PC-9 (cell line): ENCODE measurements at regions of chr5 and their contacts with region 1.

Region 1: DNA sequence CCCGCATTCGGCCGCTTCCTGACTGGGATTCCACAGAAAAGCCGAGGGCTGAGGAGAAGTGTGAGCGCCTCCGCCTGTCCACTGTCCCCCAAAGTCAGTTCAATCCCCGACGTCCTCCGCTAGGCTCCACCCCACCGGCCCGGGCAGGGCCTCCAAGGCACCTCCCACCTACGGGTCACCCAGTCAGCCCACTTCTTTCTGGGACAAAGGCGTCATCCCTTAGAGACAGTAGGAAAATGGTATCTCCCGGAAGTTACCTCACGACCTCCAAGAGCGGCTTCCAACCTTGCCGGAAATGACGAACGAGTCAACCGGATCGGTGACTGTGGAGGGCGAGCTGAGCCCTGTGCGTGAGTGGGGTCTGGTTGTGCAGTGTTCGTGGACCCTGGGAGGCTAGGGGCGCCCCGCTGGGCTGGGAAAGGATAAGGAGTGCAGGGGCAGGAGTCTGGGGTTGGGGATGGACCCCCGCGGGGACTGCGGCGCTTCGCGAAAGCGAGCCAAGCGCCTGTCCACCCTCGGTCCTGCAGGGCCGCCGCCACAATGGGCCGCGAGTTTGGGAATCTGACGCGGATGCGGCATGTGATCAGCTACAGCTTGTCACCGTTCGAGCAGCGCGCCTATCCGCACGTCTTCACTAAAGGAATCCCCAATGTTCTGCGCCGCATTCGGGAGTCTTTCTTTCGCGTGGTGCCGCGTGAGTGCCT is at the starts of genes GDF9 and UQCRQ:
- DNase-seq: peak; percentile 96 to 97
- H3K4me3 ChIP-seq: peak within 1 kb of the TSS; percentile 76
- H3K27ac ChIP-seq: peak within 1 kb of the TSS; percentile 69
- H3K4me1 ChIP-seq: peaks cover 18% of the 10 kb centered on the region
- H3K27me3 ChIP-seq: no peaks in the 10 kb centered on the region
- CTCF ChIP-seq: peak; percentile 36; the same call in 1 of the 2 replicates
- total RNA-seq, gene GDF9: 0.73 and 1.4 TPM in 2 replicates
- total RNA-seq, gene UQCRQ: 414 and 446 TPM in 2 replicates

Region 2: GRCh38 chr5:132674671-132675506 is 191.6 kb before region 1 on chr5:
- CTCF ChIA-PET with region 1: no interaction called
- POLR2A ChIA-PET with region 1: no interaction called
- intact Hi-C with region 1: loop called (anchors 5 kb)
- DNase-seq: peak; percentile 42 to 81
- H3K4me3 ChIP-seq: no peak overlapping the region
- H3K27ac ChIP-seq: no peak overlapping the region
- H3K4me1 ChIP-seq: peaks cover 11% of the 10 kb centered on the region
- H3K27me3 ChIP-seq: no peaks in the 10 kb centered on the region
- CTCF ChIP-seq: no peak

Region 3: DNA sequence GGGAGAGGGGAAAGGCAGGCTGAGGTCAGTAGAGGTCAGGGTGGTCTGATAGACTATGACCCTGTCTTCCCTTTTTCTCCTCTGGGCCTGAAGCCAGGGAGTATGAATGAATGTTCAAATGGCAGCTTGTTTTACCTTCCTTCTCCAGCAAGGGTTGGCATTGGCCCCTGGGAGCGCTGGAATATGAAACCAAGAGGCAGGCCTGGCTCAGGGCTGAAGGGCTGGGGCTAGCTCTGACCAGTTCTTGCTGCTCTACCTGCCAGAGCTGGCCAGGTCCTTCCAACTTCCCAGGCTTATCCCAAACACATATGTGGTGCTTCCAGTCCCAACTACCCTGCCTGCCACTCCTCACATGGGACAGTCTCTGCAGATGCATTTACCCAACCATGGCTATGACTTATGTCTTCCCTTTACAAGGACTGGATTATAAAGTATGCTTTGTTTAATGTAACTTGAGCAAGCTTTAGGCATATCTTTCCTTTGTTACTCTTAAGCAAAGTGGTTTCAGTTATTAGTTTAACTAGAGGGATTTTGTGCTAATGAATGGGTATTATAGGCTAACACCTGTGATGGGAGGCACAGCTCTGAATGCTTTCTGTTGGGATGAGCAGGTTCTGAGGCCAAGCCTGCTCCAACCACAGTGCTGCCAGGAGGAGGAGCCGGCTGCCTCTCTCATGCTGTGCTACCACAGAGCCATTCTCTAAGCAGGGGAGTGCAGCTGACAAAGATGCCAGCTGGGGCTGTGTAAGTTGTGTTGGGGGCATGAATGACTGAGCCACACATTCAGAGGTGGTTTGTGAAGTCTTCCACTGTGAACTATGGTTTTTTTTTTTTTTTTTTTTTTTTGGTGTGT is 113.1 kb before region 1 on chr5:
- CTCF ChIA-PET with region 1: no interaction called
- POLR2A ChIA-PET with region 1: no interaction called
- intact Hi-C with region 1: loop called (anchors 5 kb)
- DNase-seq: no peak
- H3K4me3 ChIP-seq: no peak overlapping the region
- H3K27ac ChIP-seq: no peak overlapping the region
- H3K4me1 ChIP-seq: no peaks in the 10 kb centered on the region
- H3K27me3 ChIP-seq: no peaks in the 10 kb centered on the region
- CTCF ChIP-seq: no peak

Region 4: DNA sequence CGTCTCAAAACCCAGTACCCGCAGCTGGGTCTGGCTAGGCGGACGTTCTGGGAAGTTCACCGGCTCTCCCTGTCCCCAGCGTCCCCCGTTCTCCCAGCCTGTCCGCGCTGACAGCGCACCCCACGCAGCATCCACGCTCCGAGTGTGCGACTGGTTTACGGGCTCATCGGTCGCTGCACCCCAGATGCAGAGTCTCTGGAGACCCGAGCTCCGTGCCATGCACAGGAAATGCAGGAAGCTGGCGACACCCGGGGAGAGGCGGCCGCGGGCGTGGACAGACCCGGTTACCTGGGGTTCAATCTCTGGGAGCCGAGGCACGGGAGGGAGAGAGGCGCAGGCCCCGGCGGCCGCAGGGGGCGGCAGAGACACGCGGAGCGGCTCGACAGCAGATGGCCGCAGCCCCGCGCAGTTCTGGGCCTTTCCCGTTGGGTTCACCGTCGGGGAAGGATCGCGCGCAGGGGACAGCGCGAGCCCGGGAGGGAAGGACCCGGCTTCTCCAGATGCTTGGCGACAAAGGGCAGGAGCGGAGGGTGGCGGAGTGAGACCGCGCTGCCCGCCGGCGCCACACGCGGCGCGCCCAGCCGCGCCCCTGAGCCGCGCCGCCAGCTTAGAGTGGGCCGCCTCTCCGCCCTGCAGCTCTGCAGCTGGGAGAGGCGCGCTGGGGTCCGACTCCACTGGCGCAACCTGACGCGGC is 36.6 kb before region 1 on chr5:
- CTCF ChIA-PET with region 1: interaction called, 5 read pairs
- POLR2A ChIA-PET with region 1: interaction called, 15 read pairs
- intact Hi-C with region 1: loop called (anchors 1 kb)
- DNase-seq: peak; percentile 59 to 79
- H3K4me3 ChIP-seq: peak overlapping the region; percentile 83
- H3K27ac ChIP-seq: peak overlapping the region; percentile 42; the same call in 1 of the 2 replicates
- H3K4me1 ChIP-seq: peaks cover 14% of the 10 kb centered on the region; the same call in 1 of the 2 replicates
- H3K27me3 ChIP-seq: no peaks in the 10 kb centered on the region
- CTCF ChIP-seq: peak; percentile 82

Region 5: GRCh38 chr5:134051305-134051704 is 1184.8 kb after region 1 on chr5:
- CTCF ChIA-PET with region 1: no interaction called
- POLR2A ChIA-PET with region 1: interaction called, 23 read pairs
- intact Hi-C with region 1: no loop called
- DNase-seq: peak in 1 of 2 experiments; percentile 81
- H3K4me3 ChIP-seq: no peak overlapping the region
- H3K27ac ChIP-seq: peak overlapping the region; percentile 50; the same call in 1 of the 2 replicates
- H3K4me1 ChIP-seq: peaks cover 48% of the 10 kb centered on the region
- H3K27me3 ChIP-seq: no peaks in the 10 kb centered on the region
- CTCF ChIP-seq: no peak